Breast epithelium (tissue), 4 donors: ENCODE measurements at regions of chr6 and their contacts with region 1.

Region 1: DNA sequence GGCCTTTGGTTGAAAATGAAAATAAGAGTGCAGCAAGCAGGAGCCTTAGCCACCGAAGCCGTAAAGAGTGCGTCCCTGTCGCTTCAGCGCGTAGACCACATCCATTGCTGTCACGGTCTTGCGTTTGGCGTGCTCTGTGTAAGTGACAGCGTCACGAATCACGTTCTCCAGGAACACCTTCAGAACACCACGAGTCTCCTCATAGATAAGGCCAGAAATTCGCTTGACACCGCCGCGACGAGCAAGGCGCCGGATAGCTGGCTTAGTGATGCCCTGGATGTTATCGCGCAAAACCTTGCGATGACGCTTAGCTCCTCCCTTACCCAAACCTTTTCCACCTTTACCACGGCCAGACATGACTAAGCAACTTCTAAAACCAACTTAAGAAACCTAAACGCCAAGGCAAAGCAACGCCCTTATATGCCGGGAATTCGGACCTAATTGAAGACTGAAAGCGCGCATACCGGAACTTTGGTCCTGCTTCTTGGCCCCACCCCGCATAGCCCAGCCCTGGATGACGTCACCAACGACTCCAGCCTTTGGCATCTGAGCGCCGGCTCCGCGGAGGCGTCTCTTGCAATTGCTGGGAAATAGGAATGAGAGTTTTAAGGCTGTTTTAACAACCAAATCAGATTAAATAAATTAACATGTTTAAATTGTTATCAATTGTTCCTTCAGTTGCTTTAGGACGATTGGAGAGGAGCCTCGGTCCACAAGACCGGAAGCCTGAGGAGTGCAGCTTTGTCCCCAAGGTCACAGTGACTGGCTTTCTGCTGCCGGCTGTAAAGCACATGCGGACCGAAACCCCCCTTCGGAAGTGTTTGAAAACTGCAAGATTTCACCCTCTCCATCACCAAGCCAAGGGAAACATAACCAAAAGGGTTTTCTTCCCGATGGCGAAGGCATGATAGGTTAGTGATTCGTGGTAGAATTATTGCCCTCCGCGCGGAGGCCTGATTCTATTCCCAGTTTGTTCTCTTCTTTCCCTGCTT is 79.6 kb upstream of the BTN3A2 start:
- DNase-seq: peak; percentile 98
- H3K4me3 ChIP-seq: peak overlapping the region; percentile 59 to 79 (median 74)
- H3K27ac ChIP-seq: peak overlapping the region; percentile 96 to 98
- H3K4me1 ChIP-seq: peaks cover 0 to 3% of the 10 kb centered on the region in 2 donors
- H3K27me3 ChIP-seq: no peaks in the 10 kb centered on the region
- CTCF ChIP-seq: peak in 1 of 3 donors; percentile 24
- POLR2A ChIP-seq: peak; percentile 87

Region 2: GRCh38 chr6:26223650-26224546 is 61.5 kb before region 1 on chr6:
- intact Hi-C with region 1: loop called (anchors 10 kb)
- DNase-seq: peak in 1 of 2 donors; percentile 71
- H3K4me3 ChIP-seq: peak overlapping the region; percentile 40 to 66 (median 54)
- H3K27ac ChIP-seq: peak overlapping the region; percentile 81 to 87
- H3K4me1 ChIP-seq: no peaks in the 10 kb centered on the region
- H3K27me3 ChIP-seq: no peaks in the 10 kb centered on the region
- CTCF ChIP-seq: no peak
- POLR2A ChIP-seq: peak; percentile 36

Region 3: DNA sequence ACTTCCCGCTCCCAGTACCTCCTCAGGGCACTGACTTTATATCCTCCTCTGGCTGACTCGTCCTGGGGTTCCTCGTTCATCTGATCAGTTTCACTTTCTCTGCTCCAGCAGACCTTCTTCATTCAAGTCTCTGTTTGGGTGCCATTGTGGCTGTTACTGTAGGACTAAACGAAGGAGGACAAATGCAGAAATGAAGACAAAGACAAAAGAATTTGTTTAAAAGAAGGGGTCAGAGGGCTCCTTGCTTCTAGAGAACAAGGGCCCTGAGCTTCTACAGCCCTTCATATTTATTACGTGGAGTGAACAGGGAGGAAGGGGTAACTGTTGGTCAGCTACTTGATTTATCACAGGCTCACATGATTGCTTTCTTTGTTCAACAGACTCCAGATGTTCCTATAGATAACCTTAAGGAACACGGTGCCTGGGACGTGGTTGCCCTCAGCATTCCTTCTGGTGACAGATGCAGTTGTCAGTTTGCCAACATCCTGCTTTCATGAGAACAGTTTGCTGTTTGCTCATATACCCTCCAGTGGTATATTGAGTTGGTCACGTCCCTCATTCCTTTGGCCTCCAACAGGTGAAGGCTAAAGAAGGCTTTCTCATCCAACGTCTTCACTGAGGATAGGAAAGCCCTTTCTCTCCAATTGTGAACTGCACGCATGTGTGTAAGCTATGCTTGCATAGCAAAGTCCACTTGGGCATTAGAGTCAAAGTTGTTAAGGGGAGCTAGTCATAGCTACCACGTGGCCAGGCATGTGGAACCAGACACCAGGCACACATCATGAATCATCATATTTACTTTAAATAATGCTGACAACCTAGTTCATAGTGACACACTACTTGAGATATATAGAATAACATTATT is 10.5 kb after region 1 on chr6:
- intact Hi-C with region 1: no loop called
- DNase-seq: no peak
- H3K4me3 ChIP-seq: peak overlapping the region in 2 of 3 donors; percentile 3 to 7
- H3K27ac ChIP-seq: peak overlapping the region in 1 of 2 donors; percentile 40
- H3K4me1 ChIP-seq: no peaks in the 10 kb centered on the region
- H3K27me3 ChIP-seq: peaks cover 0 to 7% of the 10 kb centered on the region in 2 donors
- CTCF ChIP-seq: no peak
- POLR2A ChIP-seq: no peak